CD4-positive, alpha-beta T cell (primary cell): ENCODE measurements at regions of chr4 and their contacts with region 1.

Region 1: DNA sequence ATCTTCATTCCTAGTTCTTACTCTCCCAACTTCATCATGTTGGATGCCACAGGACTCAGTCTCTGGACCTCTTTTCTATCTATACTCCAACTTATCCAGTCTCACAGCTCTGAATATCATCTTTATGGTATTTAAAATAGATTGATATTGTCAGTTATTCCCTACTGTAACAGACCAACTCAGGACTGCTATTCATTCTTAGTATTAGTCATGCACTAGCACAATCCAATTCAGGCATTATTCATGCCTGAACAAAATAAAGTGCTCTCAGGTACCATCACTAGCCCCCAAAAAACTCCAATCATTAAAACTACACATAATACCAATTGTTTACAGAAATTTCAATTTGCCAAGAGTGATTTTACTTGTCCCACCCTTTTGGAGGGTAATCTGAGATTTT is 37.7 kb downstream of the FRYL start:
- DNase-seq: no peak
- ATAC-seq: no peak
- H3K4me3 ChIP-seq: no peak overlapping the region
- H3K4me3 Mint-ChIP-seq: no peak overlapping the region
- H3K27ac ChIP-seq: no peak overlapping the region
- H3K27ac Mint-ChIP-seq: peak overlapping the region; percentile 67
- H3K4me1 ChIP-seq: peaks cover 35% of the 10 kb centered on the region
- H3K4me1 Mint-ChIP-seq: peaks cover 90% of the 10 kb centered on the region
- H3K27me3 ChIP-seq: no peaks in the 10 kb centered on the region
- H3K27me3 Mint-ChIP-seq: no peaks in the 10 kb centered on the region
- CTCF ChIP-seq: no peak

Region 2: GRCh38 chr4:48623182-48623780 is 119.1 kb before region 1 on chr4:
- CTCF ChIA-PET with region 1: no interaction called
- POLR2A ChIA-PET with region 1: no interaction called
- intact Hi-C with region 1: no loop called
- DNase-seq: no peak
- ATAC-seq: no peak
- H3K4me3 ChIP-seq: no peak overlapping the region
- H3K4me3 Mint-ChIP-seq: no peak overlapping the region
- H3K27ac ChIP-seq: no peak overlapping the region
- H3K27ac Mint-ChIP-seq: no peak overlapping the region
- H3K4me1 ChIP-seq: no peaks in the 10 kb centered on the region
- H3K4me1 Mint-ChIP-seq: peaks cover 4% of the 10 kb centered on the region
- H3K27me3 ChIP-seq: no peaks in the 10 kb centered on the region
- H3K27me3 Mint-ChIP-seq: no peaks in the 10 kb centered on the region
- CTCF ChIP-seq: no peak

Region 3: DNA sequence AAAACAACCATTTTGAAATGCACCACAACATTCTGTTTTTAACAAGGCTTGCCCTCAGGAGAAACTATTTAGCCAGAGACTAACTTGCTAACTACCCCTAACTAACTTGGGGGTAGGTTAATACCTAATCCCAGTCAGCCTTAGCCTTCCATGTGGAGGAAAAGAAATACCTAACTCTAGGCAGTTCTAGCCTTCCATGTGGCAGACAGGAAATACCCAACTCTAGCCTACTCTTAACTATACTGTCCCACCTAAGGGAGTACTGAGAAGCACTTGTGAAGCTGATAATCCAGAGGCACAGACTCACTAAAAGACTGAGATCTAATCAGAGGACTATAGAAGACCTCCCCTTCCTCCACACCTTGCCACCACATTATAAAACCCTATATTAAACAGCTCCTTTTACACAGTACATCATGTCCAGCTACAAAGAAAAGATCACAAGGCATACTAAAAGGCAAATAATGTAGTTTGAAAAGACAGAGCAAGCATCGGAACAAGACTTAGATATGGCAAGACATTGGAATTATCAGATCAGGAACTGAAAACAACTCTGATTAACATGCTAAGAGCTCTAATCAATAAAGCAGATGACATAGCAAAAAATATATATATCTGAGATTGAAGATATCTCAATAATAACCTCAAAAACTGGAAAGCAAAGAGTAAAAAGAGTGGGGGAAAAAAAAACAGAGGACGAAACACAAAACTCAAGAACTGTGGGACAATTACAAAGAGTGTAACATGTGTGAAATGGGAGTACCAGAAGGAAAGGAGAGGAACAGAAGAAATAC is 14.5 kb before region 1 on chr4:
- CTCF ChIA-PET with region 1: no interaction called
- POLR2A ChIA-PET with region 1: interaction called, 4 read pairs
- intact Hi-C with region 1: loop called in 1 of 2 experiments (anchors 2 kb)
- DNase-seq: no peak
- ATAC-seq: no peak
- H3K4me3 ChIP-seq: no peak overlapping the region
- H3K4me3 Mint-ChIP-seq: peak overlapping the region; percentile 2
- H3K27ac ChIP-seq: no peak overlapping the region
- H3K27ac Mint-ChIP-seq: peak overlapping the region; percentile 80
- H3K4me1 ChIP-seq: peaks cover 32% of the 10 kb centered on the region
- H3K4me1 Mint-ChIP-seq: peaks cover 95% of the 10 kb centered on the region
- H3K27me3 ChIP-seq: no peaks in the 10 kb centered on the region
- H3K27me3 Mint-ChIP-seq: no peaks in the 10 kb centered on the region
- CTCF ChIP-seq: no peak